Activated CD8-positive, alpha-beta memory T cell treated with anti-CD3 and anti-CD28 coated beads, Interleukin-2, amount 10 ng/mL, durations not matched to agents 7 days and 5 days (primary cell): ENCODE measurements at regions of chr6 and their contacts with region 1.

Region 1: DNA sequence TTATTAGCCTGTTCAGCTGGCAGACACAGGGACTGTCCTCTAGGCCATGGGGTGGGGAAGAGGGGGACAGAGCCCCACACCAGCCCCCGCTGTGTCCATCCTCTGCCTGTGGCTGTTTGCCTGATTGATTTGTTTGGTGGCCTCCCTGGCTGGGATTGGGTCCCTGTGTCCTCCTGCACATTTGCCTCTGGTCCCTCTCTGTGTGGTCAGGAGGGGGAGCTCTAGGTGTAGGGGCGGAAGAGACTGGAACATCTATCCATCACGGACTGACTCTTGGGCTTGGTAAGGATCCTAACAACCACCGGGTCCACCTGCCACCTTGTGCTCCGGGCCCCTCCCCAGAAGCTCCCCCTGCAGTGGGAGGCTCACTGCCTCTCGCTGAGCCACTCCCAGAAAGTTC is 38.4 kb upstream of the CCDC167 start:
- DNase-seq: no peak
- ATAC-seq: no peak
- H3K4me3 Mint-ChIP-seq: no peak overlapping the region
- H3K27ac Mint-ChIP-seq: no peak overlapping the region
- H3K4me1 Mint-ChIP-seq: peaks cover 5% of the 10 kb centered on the region
- H3K27me3 Mint-ChIP-seq: peaks cover 38% of the 10 kb centered on the region

Region 2: GRCh38 chr6:37499433-37500293 is 38.4 kb before region 1 on chr6 and contains the start of gene CCDC167:
- CTCF ChIA-PET with region 1: interaction called, 10 read pairs
- DNase-seq: peak; percentile 99
- ATAC-seq: peak; percentile 94
- H3K4me3 Mint-ChIP-seq: peak within 1 kb of the TSS; percentile 95
- H3K27ac Mint-ChIP-seq: peak within 1 kb of the TSS; percentile 97
- H3K4me1 Mint-ChIP-seq: peaks cover 82% of the 10 kb centered on the region
- H3K27me3 Mint-ChIP-seq: no peaks in the 10 kb centered on the region
- total RNA-seq, gene CCDC167: 73.8 to 83.4 TPM

Region 3: GRCh38 chr6:37691904-37692806 is 154.0 kb after region 1 on chr6:
- CTCF ChIA-PET with region 1: interaction called, 10 read pairs
- DNase-seq: peak; percentile 83
- ATAC-seq: peak; percentile 66
- H3K4me3 Mint-ChIP-seq: no peak overlapping the region
- H3K27ac Mint-ChIP-seq: no peak overlapping the region
- H3K4me1 Mint-ChIP-seq: peaks cover 17% of the 10 kb centered on the region
- H3K27me3 Mint-ChIP-seq: peaks cover 31% of the 10 kb centered on the region